ENCODE measurements at regions of chr1 and their contacts with region 1.

Region 1: DNA sequence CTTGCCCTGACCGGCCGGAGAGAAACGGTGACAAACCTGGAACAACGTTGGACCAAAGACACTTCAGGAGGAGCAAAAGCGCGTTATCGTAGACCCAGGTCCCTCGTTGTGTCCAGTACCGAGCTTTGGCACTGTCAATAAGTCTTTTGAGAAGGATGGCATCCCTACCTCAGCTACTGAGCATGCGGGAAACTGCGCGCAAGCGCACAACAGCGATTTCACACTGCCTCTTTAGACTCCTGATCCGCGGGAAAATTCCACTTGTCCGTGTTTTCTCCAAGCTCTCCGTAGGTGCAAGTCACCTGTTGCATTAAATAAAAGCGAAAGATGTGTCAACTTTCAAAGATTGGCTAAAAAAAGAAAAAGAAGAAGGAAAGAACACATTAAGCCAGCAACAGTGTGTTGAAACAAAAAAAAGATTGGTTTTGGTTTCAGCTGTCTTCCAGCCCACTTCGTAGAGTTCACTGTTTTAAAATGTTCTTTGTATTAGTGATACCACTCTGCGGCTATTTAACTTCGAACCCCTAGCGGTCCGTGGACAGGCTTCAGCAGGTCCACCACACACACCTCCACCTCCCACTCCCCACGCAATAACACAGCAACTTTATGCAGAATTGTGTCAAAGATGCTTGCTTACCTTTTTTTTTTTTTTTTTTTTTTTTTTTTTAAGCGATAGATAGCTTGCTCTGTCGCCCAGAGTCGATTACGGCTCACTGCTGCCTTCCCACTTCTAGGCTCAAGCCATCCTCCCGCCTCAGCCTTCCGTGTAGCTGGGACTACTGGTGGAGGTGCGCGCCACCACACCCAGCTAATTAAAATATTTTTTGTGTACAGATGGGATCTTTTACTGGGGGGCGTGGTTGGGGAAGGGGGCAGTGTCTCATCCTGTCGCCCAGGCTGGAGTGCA is at the start of gene BPNT1:
- DNase-seq: peak; percentile 82
- CTCF ChIP-seq: no peak

Region 2: DNA sequence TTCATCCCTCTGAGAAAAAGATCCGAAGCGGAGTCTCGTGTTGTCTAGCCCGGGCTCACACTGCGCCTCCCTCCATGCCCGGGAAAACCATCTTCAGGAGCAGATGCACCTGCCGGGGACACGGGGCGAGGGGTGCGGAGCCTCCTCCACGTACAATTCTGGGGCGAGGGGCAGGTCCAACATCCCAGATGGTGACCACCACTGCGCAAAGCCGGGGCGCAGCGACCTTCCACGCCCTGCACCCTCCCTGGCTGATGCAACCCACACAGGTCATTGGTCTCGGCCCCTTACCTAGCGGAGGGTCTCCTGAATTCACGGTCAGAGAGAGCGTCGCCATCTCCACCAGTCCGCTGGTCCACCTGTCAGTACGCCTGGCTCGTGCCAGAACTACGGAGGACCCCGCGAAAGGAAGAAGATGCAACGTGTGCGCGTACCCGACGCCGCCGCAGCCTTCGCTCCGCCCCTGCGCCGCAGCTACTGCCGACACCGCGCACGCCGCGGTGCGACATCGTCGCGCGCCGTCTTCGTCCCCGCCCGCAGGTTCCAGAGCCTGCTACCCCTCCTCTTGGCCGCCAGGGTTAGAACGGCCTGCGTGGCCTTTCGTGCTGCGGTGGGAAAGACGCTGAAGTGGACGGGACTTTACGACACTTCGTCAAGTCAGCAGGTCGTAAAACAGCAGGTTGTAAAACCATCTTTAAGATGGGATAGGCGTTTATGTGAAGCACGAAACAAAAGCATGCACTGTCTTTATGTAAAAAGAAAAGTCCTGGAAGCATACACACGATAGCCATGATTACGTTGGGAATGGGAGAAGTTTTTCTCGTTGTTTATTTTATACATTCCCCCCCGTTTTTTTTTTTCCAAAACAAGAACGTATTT is 43.6 kb before region 1 on chr1 and contains the start of gene EPRS1:
- CTCF ChIA-PET with region 1: interaction called, 3 read pairs
- POLR2A ChIA-PET with region 1: interaction called, 10 read pairs
- DNase-seq: peak; percentile 93
- CTCF ChIP-seq: peak; percentile 41